ENCODE measurements at regions of chr10 and their contacts with region 1.

Region 1: GRCh38 chr10:110203500-110204455 is 3.6 kb upstream of the MXI1 start:
- DNase-seq: no peak
- H3K4me3 Mint-ChIP-seq: no peak overlapping the region
- H3K27ac Mint-ChIP-seq: no peak overlapping the region
- H3K4me1 Mint-ChIP-seq: peaks cover 28% of the 10 kb centered on the region
- H3K27me3 Mint-ChIP-seq: peaks cover 42% of the 10 kb centered on the region

Region 2: DNA sequence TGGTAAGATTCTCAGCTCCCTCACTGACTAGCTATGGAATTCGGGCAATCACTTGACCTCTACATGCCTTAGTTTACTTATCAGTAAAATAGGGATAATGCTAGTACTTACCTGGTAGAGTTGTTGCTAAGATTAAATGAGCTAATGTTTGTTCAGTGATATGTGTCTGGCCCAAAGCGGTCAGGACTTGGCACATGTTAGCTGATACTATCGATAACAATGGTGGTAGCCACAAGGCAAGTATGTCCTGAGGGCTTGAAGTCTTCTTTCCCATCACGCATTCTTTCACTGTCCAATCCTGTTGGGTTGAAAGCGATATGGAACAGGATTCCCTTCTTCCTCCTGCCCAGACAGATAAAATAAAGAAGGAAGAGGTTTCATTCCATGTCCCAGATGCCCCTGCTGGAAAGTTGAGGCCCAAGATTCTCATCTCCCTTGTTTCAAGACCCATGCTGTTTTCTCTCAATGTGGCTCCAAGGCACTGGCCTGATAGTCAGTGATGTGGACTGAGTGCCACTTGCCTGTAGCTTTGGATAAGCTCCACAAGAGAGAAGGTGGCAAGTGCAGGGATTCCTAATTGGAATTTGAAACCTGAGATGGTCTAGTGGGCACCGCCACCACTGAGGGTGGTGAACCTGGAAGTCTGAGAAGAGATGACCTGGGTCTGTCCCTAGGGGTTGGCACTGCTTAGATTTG is 21.7 kb before region 1 on chr10:
- intact Hi-C with region 1: loop called (anchors 2 kb)
- DNase-seq: no peak
- H3K4me3 Mint-ChIP-seq: no peak overlapping the region
- H3K27ac Mint-ChIP-seq: no peak overlapping the region
- H3K4me1 Mint-ChIP-seq: peaks cover 2% of the 10 kb centered on the region
- H3K27me3 Mint-ChIP-seq: peaks cover 46% of the 10 kb centered on the region

Region 3: DNA sequence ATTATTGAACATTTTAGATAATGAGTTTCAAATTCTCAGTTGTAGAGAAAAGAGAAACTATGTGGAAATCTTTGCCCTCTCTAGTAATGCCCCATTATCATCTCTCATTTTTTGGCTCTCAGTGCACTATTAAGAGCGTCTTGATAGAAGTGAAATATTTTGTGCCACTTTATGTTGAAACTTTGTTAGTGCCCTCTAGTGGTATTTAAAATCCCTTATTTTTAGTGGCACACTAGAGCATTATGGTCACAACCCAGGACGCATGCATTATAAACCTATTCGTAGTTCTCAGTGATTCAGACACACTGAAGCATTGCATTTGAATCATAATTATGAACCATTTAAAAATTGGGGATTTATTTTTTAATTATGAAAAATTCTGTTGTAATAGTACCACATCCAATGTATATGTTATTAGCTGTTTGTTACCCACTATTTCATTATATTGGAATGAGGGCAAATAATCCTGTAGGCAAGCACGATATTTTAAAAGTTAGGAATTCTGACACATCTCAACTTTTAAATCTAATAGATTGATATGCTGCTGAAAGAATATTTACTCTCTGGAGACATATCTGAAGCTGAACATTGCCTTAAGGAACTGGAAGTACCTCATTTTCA is 689.9 kb after region 1 on chr10:
- intact Hi-C with region 1: no loop called
- DNase-seq: peak; percentile 61
- H3K4me3 Mint-ChIP-seq: no peak overlapping the region
- H3K27ac Mint-ChIP-seq: no peak overlapping the region
- H3K4me1 Mint-ChIP-seq: peaks cover 9% of the 10 kb centered on the region
- H3K27me3 Mint-ChIP-seq: no peaks in the 10 kb centered on the region

Measured in activated CD4-positive, alpha-beta T cell treated with anti-CD3 and anti-CD28 coated beads, Interleukin-2, amount 10 ng/mL, durations not matched to agents 24 days and 14 days (primary cell).